ENCODE measurements at regions of chr13 and their contacts with region 1.

Region 1: DNA sequence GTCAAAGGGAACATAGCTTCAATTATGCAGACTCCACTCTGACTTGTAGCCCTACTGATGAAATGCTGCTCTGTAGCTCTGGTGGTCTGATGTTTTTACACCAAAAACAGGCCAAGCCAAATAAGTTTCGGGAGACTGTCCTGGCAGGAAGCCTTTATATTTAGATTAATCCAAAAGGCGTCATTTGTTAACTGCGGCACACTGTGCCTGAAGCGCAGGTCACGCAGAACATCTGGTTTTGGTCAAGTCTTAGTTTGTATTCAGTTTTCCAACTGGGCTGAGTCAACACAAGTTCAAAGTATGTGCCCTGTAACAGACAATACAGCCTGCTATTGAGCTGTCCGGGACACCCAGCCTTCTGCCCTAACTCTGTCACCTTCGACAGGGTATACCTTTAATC is 154.6 kb upstream of the IPO5 start:
- DNase-seq: no peak
- H3K4me3 ChIP-seq: peak overlapping the region in 1 of 2 donors; percentile 6
- H3K27ac ChIP-seq: peak overlapping the region in 1 of 2 donors; percentile 21
- H3K4me1 ChIP-seq: peaks cover 0 to 4% of the 10 kb centered on the region in 2 donors
- H3K27me3 ChIP-seq: no peaks in the 10 kb centered on the region
- CTCF ChIP-seq: no peak

Region 2: DNA sequence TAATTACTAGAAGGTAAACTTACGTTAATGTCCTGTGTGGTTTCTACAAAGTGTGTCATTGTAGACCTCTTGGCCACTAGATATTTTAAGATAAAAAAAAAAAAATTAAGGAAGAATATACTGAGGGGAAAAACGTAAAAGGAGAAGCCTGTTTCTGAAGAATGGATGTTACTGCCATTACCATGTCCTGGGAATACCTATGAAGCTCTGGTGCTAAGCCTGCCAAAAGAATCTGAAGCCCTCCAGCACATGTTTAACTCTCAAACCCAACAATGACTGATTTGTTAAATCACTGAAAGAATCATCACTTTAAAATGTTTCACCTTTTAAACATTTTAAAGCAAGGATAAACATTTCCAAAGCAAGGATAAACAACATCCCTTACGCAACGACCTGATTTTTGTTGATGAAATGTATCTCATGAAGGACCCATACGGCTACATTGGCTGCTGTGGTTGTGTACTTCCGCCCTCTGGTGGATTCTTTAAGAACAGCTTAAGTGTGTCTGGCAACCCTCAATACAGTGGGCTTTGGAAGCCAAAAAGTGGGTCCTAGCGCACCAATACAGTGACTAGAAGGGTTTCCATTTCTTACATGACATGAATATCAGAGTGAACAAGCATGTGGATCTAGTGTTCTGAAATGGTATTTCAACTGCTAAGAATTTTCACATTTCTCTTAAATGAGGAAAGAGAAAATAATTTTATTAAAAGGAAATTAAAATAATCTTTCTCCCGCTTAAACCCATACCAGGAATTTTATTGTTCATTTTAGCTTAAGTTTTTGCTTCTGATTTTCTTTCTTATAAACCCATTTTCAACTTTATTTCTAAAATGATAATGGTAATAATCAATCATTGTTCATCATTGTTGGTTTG is 439.4 kb before region 1 on chr13:
- intact Hi-C with region 1: loop called (anchors 5 kb)
- DNase-seq: no peak
- H3K4me3 ChIP-seq: no peak overlapping the region
- H3K27ac ChIP-seq: no peak overlapping the region
- H3K4me1 ChIP-seq: peaks cover 0 to 18% of the 10 kb centered on the region in 2 donors
- H3K27me3 ChIP-seq: no peaks in the 10 kb centered on the region
- CTCF ChIP-seq: peak; percentile 70 to 90 (median 85)

Region 3: DNA sequence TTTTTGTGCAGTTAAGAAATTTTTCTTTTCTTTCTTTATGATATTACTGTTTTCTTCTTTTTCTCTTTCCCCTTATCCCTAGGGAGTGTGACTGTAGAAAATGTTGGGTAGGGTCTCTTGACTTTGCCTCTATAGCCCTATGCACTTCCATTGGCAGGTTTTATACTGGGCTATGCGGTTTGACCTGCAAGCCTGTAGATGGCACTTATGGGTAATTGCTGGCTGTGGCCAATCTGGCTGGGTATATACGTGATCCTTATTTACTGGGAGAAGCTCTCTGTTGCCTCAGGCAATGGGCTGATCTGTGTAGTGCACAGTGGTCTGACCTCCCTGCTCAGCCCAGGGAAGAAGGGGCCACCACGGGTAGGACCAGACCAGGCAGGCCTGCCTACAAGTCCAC is 286.1 kb before region 1 on chr13:
- intact Hi-C with region 1: no loop called
- DNase-seq: no peak
- H3K4me3 ChIP-seq: no peak overlapping the region
- H3K27ac ChIP-seq: no peak overlapping the region
- H3K4me1 ChIP-seq: no peaks in the 10 kb centered on the region
- H3K27me3 ChIP-seq: no peaks in the 10 kb centered on the region
- CTCF ChIP-seq: no peak

Region 4: DNA sequence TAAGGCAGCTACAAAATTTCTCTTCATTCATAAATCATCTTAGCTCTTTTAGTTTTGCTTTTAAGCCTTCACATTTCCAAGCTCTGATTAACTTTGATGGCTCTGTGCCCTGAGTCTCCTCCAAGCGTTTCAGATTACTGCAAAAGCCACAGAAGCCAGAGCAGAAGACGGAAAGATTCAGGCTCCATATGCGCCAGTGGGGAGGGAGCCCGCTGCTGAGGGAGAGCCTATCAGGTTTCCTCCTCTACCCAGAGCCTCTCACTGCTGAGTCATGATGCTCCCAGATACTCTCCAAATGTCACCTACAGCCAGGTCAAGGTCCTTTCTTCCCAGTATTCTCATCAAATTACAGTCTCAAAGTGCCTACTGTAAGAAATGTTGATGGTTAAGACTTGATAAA is 171.3 kb before region 1 on chr13:
- intact Hi-C with region 1: loop called (anchors 5 kb)
- DNase-seq: peak; percentile 10 to 81
- H3K4me3 ChIP-seq: no peak overlapping the region
- H3K27ac ChIP-seq: no peak overlapping the region
- H3K4me1 ChIP-seq: peaks cover 0 to 5% of the 10 kb centered on the region in 2 donors
- H3K27me3 ChIP-seq: no peaks in the 10 kb centered on the region
- CTCF ChIP-seq: no peak

Region 5: DNA sequence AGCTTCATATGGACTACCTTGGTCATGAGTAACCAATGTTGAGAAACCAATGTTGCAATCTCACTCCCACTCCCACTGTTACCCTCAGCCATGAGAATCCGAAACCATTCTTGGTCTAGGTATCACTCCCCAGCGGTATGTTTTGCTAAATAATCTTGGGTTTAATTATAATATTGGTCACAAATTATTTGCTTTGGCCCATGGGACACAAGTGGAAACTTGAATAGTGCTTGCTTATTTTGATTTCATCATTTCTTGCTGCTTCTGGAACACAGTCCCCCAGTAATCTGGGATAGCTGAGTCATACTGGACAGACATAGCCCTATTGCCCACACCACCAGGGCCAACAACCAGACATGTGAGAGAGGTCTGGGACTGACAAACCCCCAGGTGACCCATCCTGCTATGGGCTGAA is 16.9 kb before region 1 on chr13:
- intact Hi-C with region 1: loop called (anchors 2 kb)
- DNase-seq: peak; percentile 16 to 84
- H3K4me3 ChIP-seq: no peak overlapping the region
- H3K27ac ChIP-seq: peak overlapping the region; percentile 74 to 87
- H3K4me1 ChIP-seq: peaks cover 0 to 17% of the 10 kb centered on the region in 2 donors
- H3K27me3 ChIP-seq: no peaks in the 10 kb centered on the region
- CTCF ChIP-seq: no peak

Region 6: DNA sequence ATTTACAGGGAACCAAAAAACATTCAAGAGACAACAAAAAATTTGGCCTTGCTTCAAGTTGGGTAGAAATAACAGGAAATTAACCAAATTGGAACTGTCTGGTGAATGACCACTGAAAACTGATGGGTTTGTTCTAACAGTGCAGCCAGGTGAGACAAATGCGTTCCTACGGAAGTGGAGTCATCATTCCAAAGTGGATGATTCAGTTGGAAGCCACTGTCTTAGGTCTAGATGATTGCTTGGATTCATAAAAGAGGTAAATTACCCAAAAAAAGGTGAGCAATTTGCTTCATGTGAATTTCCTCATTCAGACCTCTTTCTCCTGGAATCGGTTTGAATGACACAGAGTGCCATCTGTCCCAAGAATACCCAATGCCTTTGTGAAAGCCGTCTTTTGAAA is 67.5 kb after region 1 on chr13:
- intact Hi-C with region 1: no loop called
- DNase-seq: no peak
- H3K4me3 ChIP-seq: no peak overlapping the region
- H3K27ac ChIP-seq: no peak overlapping the region
- H3K4me1 ChIP-seq: no peaks in the 10 kb centered on the region
- H3K27me3 ChIP-seq: no peaks in the 10 kb centered on the region
- CTCF ChIP-seq: no peak

Measured in ascending aorta (tissue), 2 donors.